ENCODE measurements at regions of chr3 and their contacts with region 1.

Region 1: DNA sequence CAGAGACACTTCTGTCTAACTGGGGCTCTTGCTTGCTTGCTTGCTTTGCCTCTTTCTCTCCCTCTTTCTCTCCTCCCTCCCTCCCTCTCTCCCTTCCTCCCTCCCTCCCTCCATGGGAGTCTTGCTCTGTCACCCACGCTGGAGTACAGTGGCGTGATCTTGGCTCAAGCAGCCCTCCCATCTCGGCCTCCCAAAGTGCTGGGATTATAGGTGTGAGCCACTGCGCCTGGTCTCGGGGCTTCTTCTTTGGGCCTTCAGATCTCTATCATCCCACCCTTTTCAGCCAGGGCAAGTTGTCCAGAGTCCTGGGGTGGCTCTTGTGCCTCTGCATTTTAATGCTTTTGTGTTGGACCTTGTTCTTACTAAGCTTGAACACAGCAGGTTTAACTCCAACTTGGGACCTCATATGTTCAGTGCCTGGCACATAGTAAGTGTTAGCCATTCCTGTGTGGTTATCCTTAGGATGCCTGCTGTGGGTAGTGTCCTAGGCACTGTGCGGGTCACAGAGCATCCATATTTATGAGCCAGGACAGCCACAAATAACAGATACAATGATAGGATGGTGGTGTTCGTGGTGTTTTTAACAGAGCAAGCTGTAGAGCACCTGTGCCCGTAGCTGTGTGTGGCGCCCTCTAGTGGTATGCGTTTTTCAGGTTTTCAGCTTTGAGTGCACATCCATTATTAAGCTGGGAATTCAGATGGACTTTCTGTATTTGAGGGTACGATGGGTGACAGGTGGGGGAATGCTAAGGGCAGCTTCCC is 75.1 kb downstream of the CCK start:
- DNase-seq: peak in 1 of 2 donors; percentile 65
- H3K4me3 ChIP-seq: no peak overlapping the region
- H3K27ac ChIP-seq: peak overlapping the region in 1 of 2 donors; percentile 6
- H3K4me1 ChIP-seq: peaks cover 0 to 17% (median 7%) of the 10 kb centered on the region in 4 donors
- H3K27me3 ChIP-seq: no peaks in the 10 kb centered on the region
- CTCF ChIP-seq: peak; percentile 72 to 89

Region 2: GRCh38 chr3:41893977-41894376 is 296.9 kb before region 1 on chr3:
- intact Hi-C with region 1: loop called (anchors 5 kb)
- DNase-seq: no peak
- H3K4me3 ChIP-seq: no peak overlapping the region
- H3K27ac ChIP-seq: no peak overlapping the region
- H3K4me1 ChIP-seq: no peaks in the 10 kb centered on the region
- H3K27me3 ChIP-seq: no peaks in the 10 kb centered on the region
- CTCF ChIP-seq: peak; percentile 43 to 58

Region 3: GRCh38 chr3:42118762-42119361 is 72.0 kb before region 1 on chr3:
- intact Hi-C with region 1: loop called (anchors 5 kb)
- DNase-seq: peak in 1 of 2 donors; percentile 49
- H3K4me3 ChIP-seq: no peak overlapping the region
- H3K27ac ChIP-seq: peak overlapping the region; percentile 31 to 60
- H3K4me1 ChIP-seq: peaks cover 0 to 61% (median 33%) of the 10 kb centered on the region in 4 donors
- H3K27me3 ChIP-seq: no peaks in the 10 kb centered on the region
- CTCF ChIP-seq: peak; percentile 7 to 14

Region 4: DNA sequence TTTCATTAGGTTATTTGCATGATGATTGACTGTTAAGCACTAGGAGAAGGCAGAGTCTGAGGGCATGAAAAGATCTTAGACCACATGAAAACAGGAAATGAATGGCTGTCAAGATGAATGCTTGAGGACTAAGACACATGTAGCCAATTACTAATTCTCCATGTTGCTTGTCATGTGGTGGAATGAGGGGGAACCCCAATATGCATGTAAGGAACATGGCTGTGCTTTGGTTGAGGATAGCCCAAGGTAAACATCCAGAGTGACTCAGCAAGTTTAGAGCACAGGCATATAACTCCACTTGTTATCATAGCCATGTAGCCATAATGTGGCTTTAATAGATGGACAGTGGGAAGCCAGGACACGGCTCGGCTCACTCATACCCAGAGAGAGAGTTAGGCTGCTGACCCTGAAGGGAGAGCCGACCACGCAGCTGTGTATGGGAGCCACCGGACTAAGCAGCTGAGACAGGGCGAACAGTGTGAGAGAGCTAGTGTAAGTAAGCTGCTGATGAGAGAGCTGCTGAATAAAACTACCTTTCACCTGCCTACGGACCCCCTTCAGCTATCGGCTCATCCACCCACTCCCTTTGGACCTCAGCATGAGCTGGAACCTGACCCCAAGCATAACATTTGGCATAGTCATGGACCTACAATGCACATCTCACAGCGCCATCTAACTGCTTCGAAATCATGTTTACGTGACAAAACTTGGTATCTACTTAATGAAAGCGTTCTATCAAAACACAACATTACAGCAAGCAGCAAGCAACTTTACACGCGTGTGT is 1393.4 kb after region 1 on chr3:
- intact Hi-C with region 1: no loop called
- DNase-seq: no peak
- H3K4me3 ChIP-seq: no peak overlapping the region
- H3K27ac ChIP-seq: no peak overlapping the region
- H3K4me1 ChIP-seq: peaks cover 0 to 27% (median 9%) of the 10 kb centered on the region in 4 donors
- H3K27me3 ChIP-seq: no peaks in the 10 kb centered on the region
- CTCF ChIP-seq: no peak